Activated T-helper 1 cell treated with anti-CD3 and anti-CD28 coated beads, Interleukin-12 subunit alpha, Interleukin-12 subunit beta, Interleukin-2, Interleukin-4 antibody, amounts not matched to agents 30 ng/mL and 10 ng/mL and 1 ng/mL, durations not matched to agents 14 hours and 24 hours and 36 hours (primary cell): ENCODE measurements at regions of chr12 and their contacts with region 1.

Region 1: GRCh38 chr12:111841750-111842555 is at the start of gene MAPKAPK5:
- DNase-seq: peak; percentile 95
- H3K4me3 Mint-ChIP-seq: peak within 1 kb of the TSS; percentile 98
- H3K27ac Mint-ChIP-seq: peak within 1 kb of the TSS; percentile 99
- H3K4me1 Mint-ChIP-seq: peaks cover 49% of the 10 kb centered on the region
- H3K27me3 Mint-ChIP-seq: no peaks in the 10 kb centered on the region
- total RNA-seq, gene MAPKAPK5: 82.1 and 86.5 TPM in 2 replicates

Region 2: DNA sequence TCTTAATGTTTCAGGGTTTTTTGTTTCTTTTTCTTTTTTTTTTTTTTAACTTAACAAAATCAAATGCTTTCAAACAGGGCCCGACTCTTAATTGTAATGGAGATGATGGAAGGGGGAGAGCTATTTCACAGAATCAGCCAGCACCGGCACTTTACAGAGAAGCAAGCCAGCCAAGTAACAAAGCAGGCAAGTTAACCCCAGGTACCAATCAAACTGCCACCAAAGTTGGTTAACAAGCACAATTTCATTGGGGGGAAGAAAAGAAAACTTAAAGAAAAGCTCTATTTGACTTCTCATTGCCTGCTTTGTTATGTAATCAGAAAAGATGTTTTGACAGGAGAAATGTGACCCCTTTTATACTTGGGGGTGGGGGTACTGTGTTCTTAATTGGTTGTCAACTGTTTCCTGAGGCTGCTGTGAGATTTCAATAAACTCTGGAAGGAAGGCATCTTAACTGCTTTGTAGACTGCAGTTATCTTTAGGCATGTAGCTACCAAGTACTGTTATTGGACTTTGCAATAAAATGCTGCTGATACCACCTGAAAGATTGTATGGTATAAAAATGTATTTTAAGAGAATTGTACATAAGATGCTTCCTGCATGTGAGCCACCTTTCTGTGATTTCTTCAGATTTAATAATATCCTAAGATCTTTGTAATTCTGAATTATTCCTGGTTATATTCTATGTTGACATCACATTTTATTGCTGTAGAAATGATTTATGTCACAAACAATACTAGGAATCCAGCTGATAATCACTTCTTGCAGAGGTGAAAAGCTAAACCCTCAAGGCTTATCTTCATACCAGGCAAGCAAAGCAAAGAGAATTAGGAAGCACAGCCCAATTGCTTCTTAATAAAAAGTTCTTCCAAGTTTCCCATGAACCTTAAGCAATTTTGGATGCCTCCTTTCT is 27.0 kb after region 1 on chr12:
- intact Hi-C with region 1: no loop called
- DNase-seq: no peak
- H3K4me3 Mint-ChIP-seq: no peak overlapping the region
- H3K27ac Mint-ChIP-seq: no peak overlapping the region
- H3K4me1 Mint-ChIP-seq: no peaks in the 10 kb centered on the region
- H3K27me3 Mint-ChIP-seq: no peaks in the 10 kb centered on the region

Region 3: DNA sequence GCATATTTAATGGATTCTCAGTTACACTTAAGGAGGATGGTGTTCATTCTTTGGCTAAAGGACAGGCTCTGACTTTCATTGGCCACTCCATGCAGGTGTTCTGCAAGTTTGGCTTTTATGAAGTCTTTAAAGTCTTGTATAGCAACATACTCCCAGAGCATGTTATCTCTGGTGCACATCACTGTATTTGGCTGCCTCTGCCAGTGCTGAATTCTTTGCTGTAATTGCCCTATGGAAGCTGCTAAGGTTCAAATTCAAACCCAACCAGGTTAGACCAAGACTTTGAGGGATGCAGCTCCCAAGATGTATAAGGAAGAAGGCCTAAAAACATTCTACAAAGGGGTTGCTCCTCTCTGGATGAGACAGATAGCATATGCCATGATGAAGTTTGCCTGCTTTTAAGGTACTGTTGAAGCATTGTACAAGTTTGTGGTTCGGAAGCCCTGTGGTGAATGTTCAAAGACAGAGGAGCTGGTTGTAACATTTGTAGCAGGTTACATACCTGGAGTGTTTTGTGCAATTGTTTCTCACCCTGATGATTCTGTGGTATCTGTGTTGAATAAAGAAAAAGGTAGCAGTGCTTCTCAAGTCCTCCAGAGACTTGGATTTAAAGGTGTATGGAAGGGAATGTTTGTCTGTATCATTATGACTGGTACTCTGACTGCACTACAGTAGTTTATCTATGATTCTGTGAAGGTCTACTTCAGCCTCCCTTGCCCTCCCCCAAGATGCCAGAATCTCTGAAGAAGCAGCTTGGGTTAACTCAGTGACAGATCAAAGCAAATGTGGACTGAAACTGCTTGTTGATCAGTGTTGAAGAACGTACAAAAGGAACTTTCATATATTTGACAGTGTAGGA is 151.6 kb after region 1 on chr12:
- intact Hi-C with region 1: loop called (anchors 2 kb)
- DNase-seq: peak; percentile 30
- H3K4me3 Mint-ChIP-seq: peak overlapping the region; percentile 78
- H3K27ac Mint-ChIP-seq: peak overlapping the region; percentile 81
- H3K4me1 Mint-ChIP-seq: peaks cover 67% of the 10 kb centered on the region
- H3K27me3 Mint-ChIP-seq: no peaks in the 10 kb centered on the region

Region 4: DNA sequence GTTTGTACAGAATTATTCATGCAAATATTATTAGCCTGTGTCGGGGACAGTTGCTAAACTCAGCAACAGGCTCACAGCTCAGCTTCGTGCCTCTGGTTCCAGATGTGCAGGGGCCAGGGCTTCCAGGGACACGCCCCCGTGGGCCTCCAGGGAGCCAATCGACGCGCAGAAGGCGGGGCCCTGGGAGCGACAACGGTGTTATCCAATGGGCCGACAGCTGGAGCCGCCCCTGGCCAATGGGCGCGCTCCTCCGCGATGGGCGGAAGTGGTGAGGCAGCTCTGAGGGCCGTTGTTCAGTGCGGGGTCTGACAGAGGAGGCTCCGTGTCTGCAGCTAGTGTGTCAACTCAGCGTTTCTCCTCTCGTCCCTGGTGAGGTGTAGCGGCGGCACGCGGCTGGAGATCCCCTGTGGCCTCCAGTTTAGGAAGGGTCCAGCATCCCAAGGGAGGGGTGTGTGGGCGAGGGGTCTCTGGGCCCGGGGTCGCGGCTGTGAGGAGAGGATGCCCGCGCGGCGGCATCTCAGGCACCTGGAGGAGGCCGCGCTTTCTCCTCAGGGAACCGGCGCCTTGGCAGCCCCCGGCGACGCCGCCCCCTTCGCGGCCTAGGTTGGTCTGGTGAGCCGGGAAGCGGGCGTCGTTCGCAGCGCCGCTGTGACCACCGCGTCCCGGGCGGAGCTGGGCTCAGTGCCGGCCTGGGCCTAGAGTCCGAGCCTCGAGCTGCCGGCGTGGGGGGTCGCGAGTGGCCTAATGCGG is 283.5 kb after region 1 on chr12 and contains the start of gene TRAFD1:
- intact Hi-C with region 1: loop called (anchors 5 kb)
- DNase-seq: peak; percentile 98
- H3K4me3 Mint-ChIP-seq: peak within 1 kb of the TSS; percentile 82
- H3K27ac Mint-ChIP-seq: peak within 1 kb of the TSS; percentile 84
- H3K4me1 Mint-ChIP-seq: peaks cover 41% of the 10 kb centered on the region
- H3K27me3 Mint-ChIP-seq: peaks cover 10% of the 10 kb centered on the region
- total RNA-seq, gene TRAFD1: 46.5 and 46.7 TPM in 2 replicates